Mammary epithelial cell (primary cell): ENCODE measurements at regions of chr7 and their contacts with region 1.

Region 1: DNA sequence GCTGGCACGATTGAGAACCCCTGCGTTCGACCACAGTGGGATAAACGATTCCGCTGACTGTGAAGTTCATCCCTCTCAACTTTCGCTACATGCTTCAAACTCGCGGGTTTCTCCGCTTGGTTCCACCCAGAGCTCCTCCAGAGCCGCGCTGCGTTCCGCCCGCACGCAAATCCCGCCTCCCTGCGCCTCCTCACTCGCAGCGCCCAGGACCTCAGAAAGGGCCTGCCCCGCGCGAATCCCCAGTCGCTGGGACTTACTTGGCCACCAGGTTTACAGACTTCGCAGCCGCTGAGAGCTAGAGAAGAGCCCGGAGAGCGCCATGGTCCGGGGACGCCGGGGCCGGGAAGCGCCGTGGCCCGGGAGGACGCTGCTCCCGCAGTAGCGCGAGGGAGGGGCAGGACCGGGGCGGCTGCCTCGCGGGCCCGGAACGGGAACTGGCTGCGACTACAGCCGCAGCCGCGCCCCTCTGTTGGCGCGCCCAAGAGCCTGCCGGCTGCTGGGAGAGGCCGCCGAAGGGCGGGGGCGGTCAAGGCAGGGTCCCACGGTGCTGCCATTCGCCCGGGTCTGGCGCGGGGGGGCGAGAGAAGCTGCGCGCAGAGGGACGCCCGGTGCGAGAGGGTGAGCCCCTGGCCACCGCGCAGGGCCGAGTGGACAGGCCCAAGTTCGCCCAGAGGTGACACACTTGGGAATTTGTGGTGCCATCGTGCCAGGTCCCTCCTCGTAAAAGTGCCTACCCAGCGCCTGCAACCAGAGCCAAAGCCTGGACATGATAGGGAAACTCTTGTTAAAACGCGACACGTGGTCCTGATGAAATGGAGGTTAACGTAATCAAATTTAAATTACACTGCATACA is at the start of gene NOD1:
- DNase-seq: peak; percentile 77
- H3K4me3 ChIP-seq: peak within 1 kb of the TSS; percentile 75 to 83 (median 78)
- H3K27ac ChIP-seq: peak within 1 kb of the TSS; percentile 76
- H3K4me1 ChIP-seq: peaks cover 11% of the 10 kb centered on the region
- H3K27me3 ChIP-seq: no peaks in the 10 kb centered on the region
- CTCF ChIP-seq: no peak
- total RNA-seq, gene NOD1: 6.0 to 9.7 TPM

Region 2: GRCh38 chr7:30389791-30390190 is 88.8 kb before region 1 on chr7:
- CTCF ChIA-PET with region 1: no interaction called
- dilution Hi-C with region 1: no loop called
- in situ Hi-C with region 1: no loop called
- intact Hi-C with region 1: no loop called
- DNase-seq: no peak
- H3K4me3 ChIP-seq: no peak overlapping the region
- H3K27ac ChIP-seq: no peak overlapping the region
- H3K4me1 ChIP-seq: no peaks in the 10 kb centered on the region
- H3K27me3 ChIP-seq: no peaks in the 10 kb centered on the region
- CTCF ChIP-seq: no peak

Region 3: DNA sequence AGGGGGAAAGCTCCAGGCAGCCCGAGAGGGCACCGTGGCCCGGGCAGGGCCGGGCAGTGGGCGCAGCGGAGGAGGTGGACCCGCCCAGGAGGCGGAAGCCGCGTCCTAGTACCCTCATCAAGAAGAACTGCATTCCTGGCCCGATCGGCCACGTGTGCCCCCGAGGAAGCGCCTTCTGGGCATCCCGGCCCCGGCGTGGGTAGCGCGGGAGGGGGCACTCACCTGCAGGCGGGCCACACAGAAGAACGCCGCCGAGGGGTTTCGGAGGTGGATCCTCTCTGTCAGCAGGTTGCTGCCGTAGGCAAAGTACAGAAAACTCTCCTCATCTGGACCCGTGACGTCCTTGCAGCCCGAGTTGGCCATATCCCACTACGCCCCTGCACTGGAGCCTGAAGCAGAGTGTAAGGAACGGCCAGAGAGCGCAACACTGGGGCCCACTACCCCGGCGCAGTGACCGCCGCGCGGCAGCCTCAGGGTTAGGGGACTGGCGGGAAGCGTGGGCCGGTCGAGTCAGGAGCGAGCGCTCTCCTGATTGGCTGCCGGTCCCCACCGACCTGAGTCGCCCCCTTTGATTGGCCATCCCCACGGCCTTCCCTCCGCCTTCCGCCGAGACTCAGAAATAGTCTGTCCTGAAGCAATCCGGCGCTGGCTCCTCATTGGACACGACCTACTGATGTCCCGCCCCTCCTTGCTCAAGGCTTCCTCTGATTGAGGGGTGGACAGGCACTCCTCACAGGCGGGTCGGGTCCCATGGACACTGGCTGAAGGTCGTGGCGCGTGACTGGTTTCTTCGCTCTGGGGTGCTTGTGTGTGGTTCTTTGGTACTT is 26.0 kb after region 1 on chr7 and contains the start of gene GGCT:
- CTCF ChIA-PET with region 1: no interaction called
- dilution Hi-C with region 1: no loop called
- in situ Hi-C with region 1: no loop called
- intact Hi-C with region 1: loop called (anchors 2 kb)
- DNase-seq: peak; percentile 97
- H3K4me3 ChIP-seq: peak within 1 kb of the TSS; percentile 74 to 99 (median 88)
- H3K27ac ChIP-seq: peak within 1 kb of the TSS; percentile 72
- H3K4me1 ChIP-seq: peaks cover 29% of the 10 kb centered on the region
- H3K27me3 ChIP-seq: no peaks in the 10 kb centered on the region
- CTCF ChIP-seq: no peak
- total RNA-seq, gene GGCT: 25.7 to 60.3 TPM

Region 4: DNA sequence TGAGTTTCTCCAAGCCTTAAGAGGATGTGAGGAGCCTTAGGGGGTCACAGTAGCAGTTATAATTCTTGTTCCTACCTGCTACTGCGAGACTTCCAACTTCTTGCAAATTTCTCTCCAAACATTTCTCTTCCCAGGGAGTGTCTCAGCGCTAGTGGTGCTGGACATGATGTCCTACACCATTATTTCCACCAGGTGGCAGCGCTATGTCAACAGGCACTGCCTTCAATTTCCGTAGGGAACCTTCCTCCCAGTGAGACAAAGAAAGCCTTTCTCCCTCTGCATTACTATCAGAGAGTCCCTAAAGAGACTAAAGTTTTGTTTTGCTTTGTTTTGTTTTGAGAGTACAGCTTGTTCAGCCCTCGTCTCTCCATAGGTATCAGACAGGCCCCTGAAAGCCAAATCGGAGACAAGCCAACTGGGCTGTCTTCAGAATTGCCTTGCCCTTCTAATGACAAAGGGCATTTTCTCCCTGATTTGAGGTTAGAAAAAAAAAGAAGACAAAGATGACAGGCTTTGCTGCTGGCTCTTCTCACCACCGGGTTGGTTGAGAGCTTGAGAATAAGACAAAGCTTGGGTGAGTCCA is 70.3 kb after region 1 on chr7:
- CTCF ChIA-PET with region 1: no interaction called
- dilution Hi-C with region 1: no loop called
- in situ Hi-C with region 1: no loop called
- intact Hi-C with region 1: no loop called
- DNase-seq: peak; percentile 77
- H3K4me3 ChIP-seq: no peak overlapping the region
- H3K27ac ChIP-seq: peak overlapping the region; percentile 98
- H3K4me1 ChIP-seq: peaks cover 34% of the 10 kb centered on the region
- H3K27me3 ChIP-seq: no peaks in the 10 kb centered on the region
- CTCF ChIP-seq: peak; percentile 80 to 87